K562 (cell line): ENCODE measurements at regions of chr12 and their contacts with region 1.

Region 1: GRCh38 chr12:120437754-120438494 is at the start of gene COX6A1:
- DNase-seq: peak; percentile 97 to 99 (median 98)
- ATAC-seq: peak; percentile 98
- H3K4me3 ChIP-seq: peak within 1 kb of the TSS; percentile 91
- H3K27ac ChIP-seq: peak within 1 kb of the TSS; percentile 86
- H3K4me1 ChIP-seq: peaks cover 3 to 8% of the 10 kb centered on the region in 2 experiments; a peak in 4 of 5 replicates
- H3K27me3 ChIP-seq: no peaks in the 10 kb centered on the region
- CTCF ChIP-seq: peak in 2 of 3 experiments; percentile 21 to 25; a peak in 3 of 6 replicates
- EP300 ChIP-seq: peak; percentile 32; the same call in 1 of the 2 replicates
- POLR2A ChIP-seq: peak; percentile 94
- RAD21 ChIP-seq: no peak
- polyA plus RNA-seq, gene COX6A1: 3,092 to 4,142 TPM

Region 2: GRCh38 chr12:120142231-120142877 is 295.6 kb before region 1 on chr12:
- CTCF ChIA-PET with region 1: no interaction called
- POLR2A ChIA-PET with region 1: no interaction called
- in situ Hi-C with region 1: no loop called
- intact Hi-C with region 1: no loop called
- DNase-seq: no peak
- ATAC-seq: no peak
- H3K4me3 ChIP-seq: no peak overlapping the region
- H3K27ac ChIP-seq: no peak overlapping the region
- H3K4me1 ChIP-seq: no peaks in the 10 kb centered on the region
- H3K27me3 ChIP-seq: no peaks in the 10 kb centered on the region
- CTCF ChIP-seq: no peak
- EP300 ChIP-seq: no peak
- POLR2A ChIP-seq: no peak
- RAD21 ChIP-seq: no peak

Region 3: DNA sequence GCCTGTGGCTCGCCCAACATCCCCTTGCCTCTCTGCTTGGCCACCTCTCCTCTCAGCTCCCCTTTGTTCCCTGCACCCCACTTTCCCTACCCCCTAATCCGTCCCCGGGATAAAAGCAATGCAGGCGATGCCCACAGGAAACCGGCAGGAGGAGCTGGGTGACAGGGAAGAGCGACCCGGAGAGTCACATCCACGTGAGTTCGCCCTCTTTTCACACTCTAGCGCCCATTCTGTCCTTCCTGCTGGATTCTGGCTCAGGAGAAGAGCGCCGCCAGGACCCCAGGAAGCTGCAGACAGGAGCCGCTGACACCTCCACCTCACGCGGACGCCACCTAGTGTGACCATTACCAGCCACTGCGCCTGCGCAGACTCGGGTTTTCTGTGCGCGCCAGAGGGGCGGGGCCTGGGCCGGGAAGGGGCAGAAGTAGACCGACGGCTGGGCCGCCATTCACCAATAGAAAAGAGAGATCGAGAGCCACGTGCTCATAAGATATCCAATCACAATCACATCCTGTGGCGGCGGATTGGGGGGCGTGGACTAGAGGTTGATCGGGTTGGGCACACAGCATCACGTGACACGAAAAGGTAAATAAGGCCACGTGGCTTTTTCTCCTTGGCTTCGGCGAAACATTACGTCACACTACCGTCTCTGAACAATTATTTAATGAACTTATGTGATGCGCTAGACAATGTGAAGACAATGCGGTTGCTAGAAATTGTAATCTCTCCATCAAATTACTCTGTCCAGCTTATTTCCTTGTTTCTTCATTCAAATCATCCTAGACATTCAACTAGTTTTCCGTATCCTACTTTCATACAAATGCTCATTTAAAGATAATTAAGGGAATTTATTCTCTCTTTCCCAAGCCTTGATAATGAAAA is 120.5 kb before region 1 on chr12:
- CTCF ChIA-PET with region 1: no interaction called
- POLR2A ChIA-PET with region 1: no interaction called
- in situ Hi-C with region 1: loop called (anchors 10 kb)
- intact Hi-C with region 1: no loop called
- DNase-seq: peak; percentile 99 to 100 (median 99)
- ATAC-seq: peak; percentile 99
- H3K4me3 ChIP-seq: peak overlapping the region; percentile 48
- H3K27ac ChIP-seq: peak overlapping the region; percentile 85
- H3K4me1 ChIP-seq: peaks cover 3 to 10% of the 10 kb centered on the region in 2 experiments; a peak in 4 of 5 replicates
- H3K27me3 ChIP-seq: no peaks in the 10 kb centered on the region
- CTCF ChIP-seq: peak; percentile 74 to 94 (median 85)
- EP300 ChIP-seq: no peak
- POLR2A ChIP-seq: peak; percentile 93
- RAD21 ChIP-seq: peak in 1 of 2 experiments; percentile 49; a peak in 2 of 4 replicates

Region 4: DNA sequence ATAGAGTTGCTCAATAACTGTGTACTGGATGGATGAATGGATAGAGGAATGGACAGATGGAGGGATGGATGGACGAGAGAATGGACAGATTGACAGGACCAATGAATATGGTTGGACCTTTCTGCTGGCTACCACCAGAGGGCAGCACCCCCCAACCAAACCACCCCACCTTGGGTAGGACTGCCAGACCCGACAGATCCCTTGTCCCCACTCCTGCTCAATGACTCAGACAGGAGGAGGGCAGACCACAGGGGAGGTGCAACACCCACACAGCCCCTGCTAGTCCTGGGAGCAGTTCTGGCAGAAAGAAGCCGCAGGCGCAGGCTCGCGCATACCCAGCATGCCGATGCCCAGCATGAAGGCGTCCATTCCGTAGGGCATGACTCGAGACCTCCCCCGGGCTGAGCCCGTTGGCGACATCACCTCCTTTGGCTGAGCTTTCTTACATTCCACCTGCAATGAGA is 81.3 kb before region 1 on chr12:
- CTCF ChIA-PET with region 1: interaction called, 5 read pairs
- POLR2A ChIA-PET with region 1: no interaction called
- in situ Hi-C with region 1: loop called (anchors 5 kb)
- intact Hi-C with region 1: no loop called
- DNase-seq: peak; percentile 89 to 96 (median 95)
- ATAC-seq: peak; percentile 97
- H3K4me3 ChIP-seq: no peak overlapping the region
- H3K27ac ChIP-seq: no peak overlapping the region
- H3K4me1 ChIP-seq: peaks cover 0 to 19% of the 10 kb centered on the region in 2 experiments; a peak in 3 of 5 replicates
- H3K27me3 ChIP-seq: peaks cover 15 to 45% of the 10 kb centered on the region in 2 experiments; a peak in 4 of 5 replicates
- CTCF ChIP-seq: peak; percentile 90 to 96 (median 95)
- EP300 ChIP-seq: 0 out of 2 replicates have a peak, but pooled peaks have one; percentile 21
- POLR2A ChIP-seq: no peak
- RAD21 ChIP-seq: peak; percentile 90 to 98

Region 5: GRCh38 chr12:120495723-120496412 is 57.9 kb after region 1 on chr12 and contains the start of gene DYNLL1:
- CTCF ChIA-PET with region 1: no interaction called
- POLR2A ChIA-PET with region 1: interaction called, 3 read pairs
- in situ Hi-C with region 1: no loop called
- intact Hi-C with region 1: loop called (anchors 1 kb)
- DNase-seq: peak; percentile 94 to 98 (median 96)
- ATAC-seq: peak; percentile 98
- H3K4me3 ChIP-seq: peak within 1 kb of the TSS; percentile 97
- H3K27ac ChIP-seq: peak within 1 kb of the TSS; percentile 86
- H3K4me1 ChIP-seq: peaks cover 2 to 15% of the 10 kb centered on the region in 2 experiments; a peak in 3 of 5 replicates
- H3K27me3 ChIP-seq: no peaks in the 10 kb centered on the region
- CTCF ChIP-seq: peak in 1 of 3 experiments; percentile 4; a peak in 1 of 6 replicates
- EP300 ChIP-seq: peak; percentile 17; the same call in 1 of the 2 replicates
- POLR2A ChIP-seq: peak; percentile 94
- RAD21 ChIP-seq: no peak
- polyA plus RNA-seq, gene DYNLL1: 921 to 1,112 TPM

Region 6: DNA sequence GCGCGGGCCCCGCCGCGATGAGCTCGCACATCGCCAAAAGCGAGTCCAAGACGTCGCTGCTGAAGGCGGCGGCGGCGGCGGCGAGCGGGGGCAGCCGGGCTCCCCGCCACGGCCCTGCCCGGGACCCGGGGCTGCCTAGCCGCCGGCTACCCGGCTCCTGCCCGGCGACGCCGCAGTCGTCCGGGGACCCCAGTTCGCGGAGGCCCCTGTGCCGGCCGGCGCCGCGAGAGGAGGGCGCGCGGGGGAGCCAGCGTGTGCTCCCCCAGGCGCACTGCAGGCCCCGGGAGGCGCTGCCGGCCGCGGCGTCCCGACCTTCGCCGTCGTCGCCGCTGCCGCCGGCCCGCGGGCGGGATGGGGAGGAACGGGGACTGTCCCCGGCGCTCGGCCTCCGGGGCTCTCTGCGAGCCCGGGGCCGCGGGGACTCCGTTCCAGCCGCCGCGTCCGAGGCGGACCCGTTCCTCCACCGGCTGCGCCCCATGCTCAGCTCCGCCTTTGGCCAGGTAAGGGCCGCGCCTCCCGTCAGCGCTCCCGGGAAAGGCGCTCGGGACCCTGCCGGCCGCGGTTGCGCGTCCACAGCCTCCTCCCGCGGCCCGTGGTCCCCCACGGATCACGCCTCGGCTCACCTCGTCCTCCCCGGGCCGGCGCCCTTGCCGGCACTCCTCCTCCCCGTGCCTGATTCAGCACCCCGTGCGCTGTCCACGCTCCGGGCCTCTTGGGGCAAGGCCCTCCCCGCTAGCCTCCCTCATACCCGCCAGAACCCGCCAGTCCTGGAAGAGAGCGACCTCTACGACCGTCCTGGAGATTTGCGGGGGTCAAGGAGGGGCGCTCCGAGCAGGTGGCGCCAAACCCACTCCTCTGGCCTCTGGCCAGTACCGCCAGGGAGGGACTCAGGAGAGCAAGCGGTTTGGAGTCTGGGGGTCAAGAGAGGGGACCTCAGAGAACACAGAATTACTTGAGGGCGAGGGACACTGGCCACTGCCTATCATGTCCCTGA is 203.2 kb after region 1 on chr12:
- CTCF ChIA-PET with region 1: no interaction called
- POLR2A ChIA-PET with region 1: no interaction called
- in situ Hi-C with region 1: no loop called
- intact Hi-C with region 1: loop called (anchors 10 kb)
- DNase-seq: peak; percentile 66 to 79 (median 74)
- ATAC-seq: peak; percentile 92
- H3K4me3 ChIP-seq: peak overlapping the region; percentile 39
- H3K27ac ChIP-seq: no peak overlapping the region
- H3K4me1 ChIP-seq: peaks cover 0 to 19% of the 10 kb centered on the region in 2 experiments; a peak in 3 of 5 replicates
- H3K27me3 ChIP-seq: peaks cover 29 to 40% of the 10 kb centered on the region in 2 experiments
- CTCF ChIP-seq: peak in 2 of 3 experiments; percentile 21 to 27; a peak in 2 of 6 replicates
- EP300 ChIP-seq: no peak
- POLR2A ChIP-seq: no peak
- RAD21 ChIP-seq: no peak

Region 7: GRCh38 chr12:121079736-121080272 is 641.9 kb after region 1 on chr12:
- CTCF ChIA-PET with region 1: no interaction called
- POLR2A ChIA-PET with region 1: no interaction called
- in situ Hi-C with region 1: no loop called
- intact Hi-C with region 1: no loop called
- DNase-seq: no peak
- ATAC-seq: no peak
- H3K4me3 ChIP-seq: no peak overlapping the region
- H3K27ac ChIP-seq: no peak overlapping the region
- H3K4me1 ChIP-seq: peaks cover 5% of the 10 kb centered on the region in 2 experiments; a peak in 3 of 5 replicates
- H3K27me3 ChIP-seq: no peaks in the 10 kb centered on the region
- CTCF ChIP-seq: no peak
- EP300 ChIP-seq: no peak
- POLR2A ChIP-seq: no peak
- RAD21 ChIP-seq: no peak